ENCODE measurements at regions of chr11 and their contacts with region 1.

Region 1: DNA sequence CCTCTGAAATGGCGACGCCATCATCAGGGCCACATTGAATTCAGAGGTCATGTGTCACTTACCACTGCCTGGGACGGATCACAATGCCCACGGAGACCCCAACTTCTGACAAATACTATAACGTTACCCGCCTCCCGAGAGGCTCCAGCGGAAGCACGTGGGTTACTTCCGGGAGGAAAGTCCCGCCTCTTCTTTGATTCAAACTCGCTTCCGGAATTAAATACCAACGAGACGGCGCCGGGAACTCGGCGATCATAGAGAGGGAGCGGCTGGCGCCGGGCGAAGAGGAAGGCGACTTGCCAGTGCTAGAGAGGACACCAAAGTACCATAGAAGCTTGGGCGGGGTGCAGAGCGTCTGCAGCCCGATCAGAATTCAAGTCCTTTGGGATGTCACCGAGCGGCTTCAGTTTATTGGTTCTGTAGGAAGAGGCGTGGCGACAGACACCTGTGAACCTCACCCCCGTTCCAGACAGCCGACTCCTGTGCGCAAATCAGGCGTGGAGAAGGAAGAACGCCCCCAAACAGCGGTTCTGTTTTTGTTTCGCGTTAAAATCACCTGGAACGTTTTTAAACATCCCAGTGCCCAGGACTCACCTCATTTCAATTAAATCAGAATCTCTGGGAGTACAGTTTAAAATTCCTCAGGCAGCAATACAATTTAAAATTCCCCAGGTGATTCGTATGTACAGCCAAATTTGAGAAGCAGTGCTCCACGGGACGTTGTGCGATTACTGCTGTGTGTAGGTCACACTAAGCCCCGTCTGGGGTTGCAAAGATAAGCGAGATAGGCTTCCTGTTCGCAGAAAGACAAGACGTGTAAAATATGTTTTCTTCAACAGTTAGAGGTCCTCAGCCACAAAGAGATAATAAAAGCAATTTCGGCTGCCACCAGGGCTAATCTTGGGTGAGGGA is at the start of gene TIMM10:
- H3K4me3 ChIP-seq: peak within 1 kb of the TSS; percentile 94
- H3K27ac ChIP-seq: no peak within 1 kb of the TSS
- H3K4me1 ChIP-seq: no peaks in the 10 kb centered on the region
- CTCF ChIP-seq: no peak

Region 2: DNA sequence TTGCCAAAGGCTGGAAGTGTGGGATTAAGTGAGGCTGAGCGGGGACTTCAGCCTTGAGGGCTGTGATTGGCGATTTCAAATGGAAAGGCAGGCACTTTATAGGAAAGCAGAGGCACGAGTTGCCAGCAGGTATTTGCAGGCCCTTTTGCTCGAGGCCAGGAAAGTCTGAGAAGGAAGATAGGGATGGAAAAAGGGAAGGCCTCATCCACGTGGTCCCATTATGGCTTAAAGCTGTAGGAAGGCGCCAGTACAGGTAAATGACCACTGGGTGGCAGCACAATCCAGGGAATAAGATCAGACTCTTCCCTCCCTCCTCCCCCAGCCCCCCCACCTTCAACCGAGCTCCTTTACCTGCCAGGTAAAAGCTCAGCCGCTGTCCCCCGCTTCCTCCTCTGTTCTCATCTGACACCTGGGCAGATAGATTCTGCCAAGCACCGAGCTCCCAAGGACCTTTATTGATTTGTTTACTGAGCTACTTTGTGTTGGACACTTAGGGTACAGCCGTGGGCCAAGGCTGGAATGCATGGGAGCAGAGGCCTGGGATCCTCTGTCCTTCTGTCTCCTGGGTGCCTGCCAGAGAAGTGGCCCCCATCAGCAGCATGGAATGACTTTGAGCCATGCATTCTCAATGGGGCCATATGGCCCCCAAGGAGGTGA is 185.2 kb before region 1 on chr11:
- CTCF ChIA-PET with region 1: interaction called, 20 read pairs
- POLR2A ChIA-PET with region 1: interaction called, 4 read pairs
- H3K4me3 ChIP-seq: no peak overlapping the region
- H3K27ac ChIP-seq: no peak overlapping the region
- H3K4me1 ChIP-seq: no peaks in the 10 kb centered on the region
- CTCF ChIP-seq: 0 out of 2 replicates have a peak, but pooled peaks have one; percentile 26

Region 3: GRCh38 chr11:57480409-57481137 is 50.3 kb before region 1 on chr11:
- CTCF ChIA-PET with region 1: interaction called, 25 read pairs
- POLR2A ChIA-PET with region 1: no interaction called
- H3K4me3 ChIP-seq: no peak overlapping the region
- H3K27ac ChIP-seq: no peak overlapping the region
- H3K4me1 ChIP-seq: no peaks in the 10 kb centered on the region; the same call in 1 of the 2 replicates
- CTCF ChIP-seq: no peak

Region 4: DNA sequence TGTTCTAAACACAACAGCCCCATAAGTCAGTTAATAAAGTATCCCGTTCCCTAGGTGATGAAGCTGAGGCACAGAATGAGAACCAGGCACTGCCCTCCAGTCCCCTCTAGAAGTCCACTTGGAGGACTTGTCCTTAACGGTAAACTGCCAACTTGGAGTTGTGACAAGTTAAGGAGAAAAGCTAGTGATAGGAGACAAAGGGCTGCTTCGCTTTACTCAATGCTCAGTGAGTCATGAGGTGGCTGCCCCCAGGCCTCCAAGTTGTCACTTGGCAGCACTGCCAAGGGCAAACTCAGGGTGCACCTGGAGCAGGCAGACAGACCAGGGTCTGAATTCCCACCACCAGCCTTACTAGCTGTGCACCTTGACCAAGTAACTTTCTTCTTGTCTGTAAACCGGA is 28.9 kb before region 1 on chr11:
- CTCF ChIA-PET with region 1: interaction called, 218 read pairs
- POLR2A ChIA-PET with region 1: no interaction called
- H3K4me3 ChIP-seq: no peak overlapping the region
- H3K27ac ChIP-seq: no peak overlapping the region
- H3K4me1 ChIP-seq: no peaks in the 10 kb centered on the region
- CTCF ChIP-seq: no peak

Region 5: DNA sequence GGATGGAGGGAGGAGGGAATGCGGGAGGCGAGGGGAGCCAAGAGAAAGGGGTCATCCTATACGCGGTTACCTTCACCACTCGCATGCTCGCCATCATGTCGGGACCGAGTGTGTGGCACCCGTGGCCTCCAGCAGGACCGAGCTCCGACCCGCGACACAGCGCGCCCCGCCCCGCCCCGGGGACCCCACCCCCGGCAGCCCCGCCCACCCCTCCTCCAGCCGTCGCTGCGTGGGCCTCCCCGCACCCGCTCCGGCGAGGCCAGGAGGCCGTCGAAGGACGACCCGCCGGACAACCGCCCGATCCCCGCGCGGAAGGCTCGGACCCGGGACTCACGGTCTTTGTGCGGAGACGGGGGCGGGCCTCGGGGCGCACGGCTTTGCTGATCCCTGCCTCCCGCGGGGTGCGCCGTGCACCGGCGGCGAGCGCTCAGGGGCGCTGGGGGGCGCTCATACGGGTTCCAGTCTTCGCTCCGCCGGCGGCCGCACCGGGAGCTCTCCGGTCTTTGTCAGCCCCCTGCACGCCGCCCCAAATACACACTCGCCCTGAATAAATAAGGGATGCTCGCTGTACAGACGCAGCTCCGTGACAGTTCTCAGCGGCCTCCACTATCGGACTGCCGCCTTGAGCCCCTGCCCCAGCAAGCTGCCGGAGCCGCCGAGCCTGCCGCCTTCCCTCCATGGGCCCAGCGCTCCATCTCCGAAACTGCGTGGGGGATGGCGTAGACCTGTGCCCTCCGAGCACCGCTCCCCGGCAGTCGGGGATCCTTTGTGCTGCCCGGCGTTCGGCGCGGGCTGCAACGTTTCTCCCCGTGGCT is 36.9 kb after region 1 on chr11 and contains the start of gene UBE2L6:
- CTCF ChIA-PET with region 1: interaction called, 10 read pairs
- POLR2A ChIA-PET with region 1: no interaction called
- H3K4me3 ChIP-seq: peak within 1 kb of the TSS; percentile 73
- H3K27ac ChIP-seq: no peak within 1 kb of the TSS; the same call in 1 of the 2 replicates
- H3K4me1 ChIP-seq: no peaks in the 10 kb centered on the region
- CTCF ChIP-seq: peak; percentile 64; the same call in 1 of the 2 replicates

Region 6: DNA sequence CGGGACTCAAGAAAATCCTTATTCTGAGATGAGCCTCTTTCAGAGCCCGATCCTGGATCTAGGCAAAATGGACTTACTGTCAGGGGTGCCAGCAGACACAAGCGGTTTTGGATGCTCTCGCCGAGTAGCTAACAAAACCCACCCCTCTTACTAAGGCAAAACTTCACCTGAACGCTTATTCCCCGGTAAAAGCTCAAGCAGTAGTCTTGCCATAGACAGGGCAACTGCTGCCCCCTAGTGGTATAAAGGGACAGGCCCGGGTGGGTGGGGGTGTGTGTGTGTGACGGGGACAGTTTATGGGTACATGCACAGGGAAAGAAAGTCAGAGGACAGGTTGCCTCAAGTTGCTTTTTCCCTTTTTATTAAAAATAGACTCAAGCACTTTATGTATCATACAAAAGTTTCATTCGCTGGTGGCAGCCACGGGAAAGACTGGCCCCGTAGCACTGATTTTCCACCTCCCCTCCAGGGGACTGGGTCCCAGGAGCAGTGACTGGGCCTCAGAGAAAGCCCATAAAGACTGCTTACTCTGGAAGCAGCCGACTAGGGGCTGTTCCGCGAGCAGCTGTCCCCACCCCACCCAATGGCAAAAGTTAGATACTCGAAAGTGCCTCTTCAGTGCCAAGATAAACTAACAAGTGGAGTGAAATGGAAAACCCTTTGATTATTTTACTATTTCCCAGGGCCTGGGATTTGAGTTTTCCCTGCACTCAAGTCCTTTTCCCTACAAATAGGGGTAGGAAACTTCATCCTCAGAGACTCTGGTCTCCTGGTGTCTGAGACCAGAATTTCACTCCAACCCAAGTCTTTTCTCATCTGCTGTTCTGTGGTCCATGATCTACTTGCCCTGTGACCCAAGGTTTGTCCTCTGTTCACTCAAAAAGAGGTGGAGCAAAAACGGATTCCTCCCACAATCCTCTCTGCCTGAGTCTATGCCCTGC is 114.2 kb after region 1 on chr11:
- CTCF ChIA-PET with region 1: interaction called, 56 read pairs
- POLR2A ChIA-PET with region 1: interaction called, 4 read pairs
- H3K4me3 ChIP-seq: no peak overlapping the region
- H3K27ac ChIP-seq: no peak overlapping the region
- H3K4me1 ChIP-seq: 0 out of 2 replicates have a peak, but pooled peaks cover 6% of the 10 kb centered on the region
- CTCF ChIP-seq: peak; percentile 40; the same call in 1 of the 2 replicates